IMR-90 (cell line): ENCODE measurements at regions of chr2 and their contacts with region 1.

Region 1: DNA sequence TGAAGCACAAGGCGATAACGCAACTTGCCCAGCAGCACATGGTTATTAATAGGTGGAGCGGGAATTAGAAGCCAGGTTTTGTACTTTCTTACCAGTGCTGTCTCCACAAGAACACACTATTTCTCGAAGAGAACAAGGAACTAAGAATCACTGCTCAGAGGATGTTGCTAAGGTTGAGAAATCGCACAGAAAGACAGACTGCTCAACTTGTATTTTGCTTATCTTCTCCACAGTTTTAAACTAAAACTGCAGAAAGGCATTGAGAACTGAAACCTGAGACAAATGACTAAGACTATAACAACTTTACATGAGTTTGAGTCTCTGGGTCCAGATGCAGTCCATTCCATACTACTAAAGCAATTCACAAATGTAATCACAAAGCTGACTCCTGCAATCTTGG is 6.2 kb downstream of the PRKD3 start:
- DNase-seq: peak; percentile 96
- ATAC-seq: peak; percentile 91
- H3K4me3 ChIP-seq: peak overlapping the region; percentile 14; the same call in 1 of the 2 replicates
- H3K27ac ChIP-seq: peak overlapping the region; percentile 81
- H3K4me1 ChIP-seq: peaks cover 6% of the 10 kb centered on the region
- H3K27me3 ChIP-seq: no peaks in the 10 kb centered on the region
- CTCF ChIP-seq: no peak
- POLR2A ChIP-seq: no peak
- RAD21 ChIP-seq: no peak

Region 2: GRCh38 chr2:37181726-37182688 is 136.4 kb before region 1 on chr2:
- CTCF ChIA-PET with region 1: no interaction called
- POLR2A ChIA-PET with region 1: interaction called, 10 read pairs
- dilution Hi-C with region 1: no loop called
- in situ Hi-C with region 1: no loop called
- intact Hi-C with region 1: no loop called
- DNase-seq: peak; percentile 66
- ATAC-seq: peak; percentile 90
- H3K4me3 ChIP-seq: no peak overlapping the region
- H3K27ac ChIP-seq: peak overlapping the region; percentile 80; the same call in 1 of the 2 replicates
- H3K4me1 ChIP-seq: peaks cover 3% of the 10 kb centered on the region
- H3K27me3 ChIP-seq: no peaks in the 10 kb centered on the region; the same call in 1 of the 2 replicates
- CTCF ChIP-seq: no peak
- POLR2A ChIP-seq: no peak
- RAD21 ChIP-seq: no peak

Region 3: GRCh38 chr2:37231241-37232130 is 86.9 kb before region 1 on chr2 and contains the starts of genes CEBPZ and NDUFAF7:
- CTCF ChIA-PET with region 1: no interaction called
- POLR2A ChIA-PET with region 1: no interaction called
- dilution Hi-C with region 1: no loop called
- in situ Hi-C with region 1: no loop called
- intact Hi-C with region 1: loop called (anchors 2 kb)
- DNase-seq: peak; percentile 94
- ATAC-seq: peak; percentile 94
- H3K4me3 ChIP-seq: peak within 1 kb of the TSS; percentile 93
- H3K27ac ChIP-seq: peak within 1 kb of the TSS; percentile 89
- H3K4me1 ChIP-seq: peaks cover 6% of the 10 kb centered on the region
- H3K27me3 ChIP-seq: no peaks in the 10 kb centered on the region
- CTCF ChIP-seq: no peak
- POLR2A ChIP-seq: peak; percentile 78
- RAD21 ChIP-seq: no peak; the same call in 1 of the 2 replicates
- total RNA-seq, gene CEBPZ: 33.3 and 47.8 TPM in 2 replicates
- total RNA-seq, gene NDUFAF7: 9.9 and 12.8 TPM in 2 replicates